ENCODE measurements at regions of chr15 and their contacts with region 1.

Region 1: GRCh38 chr15:73697033-73697467 is 12.9 kb downstream of the CD276 start:
- DNase-seq: peak; percentile 86 to 87
- H3K4me3 ChIP-seq: no peak overlapping the region
- H3K27ac ChIP-seq: no peak overlapping the region
- H3K4me1 ChIP-seq: peaks cover 0 to 64% (median 38%) of the 10 kb centered on the region in 4 donors
- H3K27me3 ChIP-seq: no peaks in the 10 kb centered on the region
- CTCF ChIP-seq: no peak

Region 2: GRCh38 chr15:73560501-73561117 is 136.4 kb before region 1 on chr15:
- intact Hi-C with region 1: loop called (anchors 5 kb)
- DNase-seq: no peak
- H3K4me3 ChIP-seq: no peak overlapping the region
- H3K27ac ChIP-seq: no peak overlapping the region
- H3K4me1 ChIP-seq: peaks cover 0 to 12% (median 4%) of the 10 kb centered on the region in 4 donors
- H3K27me3 ChIP-seq: no peaks in the 10 kb centered on the region
- CTCF ChIP-seq: peak in 1 of 2 experiments; percentile 46

Region 3: DNA sequence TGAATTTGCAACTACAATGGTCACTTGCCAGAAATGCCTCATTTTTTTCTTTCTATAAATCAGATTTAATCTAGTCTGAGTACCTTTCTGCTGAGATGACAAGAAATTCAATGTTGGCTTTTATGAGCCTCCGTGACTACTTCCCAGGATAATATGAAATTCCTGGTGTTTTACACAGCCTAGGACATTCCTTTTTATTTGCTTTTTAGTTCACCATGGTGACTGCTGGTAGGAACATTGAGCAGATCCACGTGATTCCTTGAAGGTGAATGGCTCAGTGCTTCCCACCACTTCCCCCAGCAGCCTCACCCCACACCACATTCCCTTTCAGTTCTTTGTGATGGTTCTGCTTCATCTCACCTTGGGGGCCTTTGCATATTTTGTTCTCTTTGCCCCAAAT is 59.5 kb before region 1 on chr15:
- intact Hi-C with region 1: loop called (anchors 5 kb)
- DNase-seq: no peak
- H3K4me3 ChIP-seq: no peak overlapping the region
- H3K27ac ChIP-seq: no peak overlapping the region
- H3K4me1 ChIP-seq: peaks cover 0 to 11% (median 5%) of the 10 kb centered on the region in 4 donors
- H3K27me3 ChIP-seq: peaks cover 0 to 16% of the 10 kb centered on the region in 2 donors
- CTCF ChIP-seq: no peak

Region 4: DNA sequence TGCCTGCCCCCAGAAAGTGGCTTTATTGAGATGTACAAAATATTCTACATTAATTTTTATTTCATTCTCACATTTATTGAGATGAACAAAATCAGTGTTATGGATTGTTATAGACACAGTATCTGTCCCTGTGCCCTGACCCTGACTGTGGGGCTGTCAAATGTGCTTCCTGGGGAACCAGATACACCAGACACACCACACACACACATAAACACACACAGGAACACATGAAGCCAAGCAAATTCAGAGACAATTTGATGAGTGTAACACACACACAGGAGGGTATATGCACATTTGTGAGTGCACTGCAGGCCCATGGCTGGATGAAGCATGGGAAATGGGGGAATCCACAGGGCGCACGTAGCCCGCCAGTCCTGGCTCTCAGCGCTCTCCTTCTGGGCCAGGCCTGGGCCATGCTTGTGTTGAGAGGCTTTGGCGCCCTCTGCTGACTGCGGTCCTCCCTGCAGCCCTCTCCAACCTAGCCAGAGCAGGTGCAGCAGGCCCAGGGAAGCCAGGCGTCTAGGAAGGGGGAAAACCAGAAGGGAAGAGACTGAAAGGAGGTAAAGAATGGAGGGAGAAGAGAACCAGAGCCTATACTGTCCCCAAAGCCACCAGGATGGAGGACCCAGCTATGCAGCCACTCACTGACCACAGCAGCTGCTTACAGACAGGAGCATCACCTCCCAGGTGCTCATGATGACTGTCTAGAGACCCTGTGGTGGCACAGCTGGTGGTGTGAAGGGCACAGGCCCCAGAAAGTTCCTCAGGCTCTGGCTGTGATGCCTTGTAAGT is 211.2 kb after region 1 on chr15:
- intact Hi-C with region 1: loop called (anchors 10 kb)
- DNase-seq: peak; percentile 88
- H3K4me3 ChIP-seq: no peak overlapping the region
- H3K27ac ChIP-seq: no peak overlapping the region
- H3K4me1 ChIP-seq: peaks cover 0 to 2% (median 0%) of the 10 kb centered on the region in 4 donors
- H3K27me3 ChIP-seq: no peaks in the 10 kb centered on the region
- CTCF ChIP-seq: peak; percentile 89 to 95

Region 5: GRCh38 chr15:74950078-74951000 is 1253.3 kb after region 1 on chr15:
- intact Hi-C with region 1: no loop called
- DNase-seq: peak; percentile 82 to 83
- H3K4me3 ChIP-seq: no peak overlapping the region
- H3K27ac ChIP-seq: no peak overlapping the region
- H3K4me1 ChIP-seq: peaks cover 0 to 18% (median 13%) of the 10 kb centered on the region in 4 donors
- H3K27me3 ChIP-seq: no peaks in the 10 kb centered on the region
- CTCF ChIP-seq: peak; percentile 95 to 99

Measured in tibial artery (tissue), 4 donors.